ENCODE measurements at regions of chr1 and their contacts with region 1.

Region 1: DNA sequence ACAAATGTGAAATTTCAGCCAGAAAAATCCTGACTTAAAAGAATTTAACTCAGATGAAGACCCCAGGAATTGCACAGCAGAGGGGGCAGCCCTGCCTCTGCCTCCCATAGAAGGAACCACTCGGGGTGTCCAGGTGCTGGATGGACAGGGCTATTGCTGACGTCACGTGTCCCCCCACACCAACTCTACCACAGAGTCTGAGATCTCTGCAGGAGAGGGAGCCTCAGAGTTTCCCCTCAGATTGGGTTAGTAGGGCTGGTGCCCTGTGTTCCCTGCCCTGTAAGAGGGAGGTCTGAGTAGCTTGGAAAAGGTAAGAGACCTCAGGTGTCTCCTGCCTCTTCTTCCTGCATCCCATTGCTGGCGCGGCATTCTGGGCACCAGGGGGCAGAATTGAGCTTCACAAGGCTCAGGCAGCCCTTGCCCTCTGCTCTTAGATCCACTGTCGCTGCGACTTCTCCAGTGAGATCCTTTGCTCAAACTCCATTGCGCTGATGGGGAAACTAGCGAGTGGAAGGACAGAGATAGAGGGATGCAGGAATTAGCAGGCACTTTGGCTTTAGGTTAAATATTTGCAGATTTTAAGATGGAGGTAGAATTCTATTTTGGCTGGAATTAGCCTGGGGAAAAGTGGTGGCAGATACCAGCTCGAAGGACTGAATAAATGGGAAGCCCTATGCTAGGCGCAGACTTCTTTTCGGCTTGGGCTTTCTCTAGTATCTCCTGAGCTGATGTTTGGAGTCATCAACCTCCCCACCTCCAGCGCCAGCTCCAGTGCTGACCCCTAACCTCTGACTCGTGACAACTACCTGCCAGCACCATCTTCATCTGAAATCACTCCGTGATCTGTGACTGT is 42.8 kb upstream of the DMBX1 start:
- DNase-seq: peak; percentile 83 to 90 (median 86)
- ATAC-seq: peak; percentile 68
- H3K4me3 ChIP-seq: no peak overlapping the region
- H3K27ac ChIP-seq: no peak overlapping the region
- H3K4me1 ChIP-seq: peaks cover 9% of the 10 kb centered on the region
- H3K27me3 ChIP-seq: peaks cover 0 to 9% of the 10 kb centered on the region in 2 donors
- CTCF ChIP-seq: peak; percentile 76 to 88 (median 78)
- POLR2A ChIP-seq: no peak

Region 2: DNA sequence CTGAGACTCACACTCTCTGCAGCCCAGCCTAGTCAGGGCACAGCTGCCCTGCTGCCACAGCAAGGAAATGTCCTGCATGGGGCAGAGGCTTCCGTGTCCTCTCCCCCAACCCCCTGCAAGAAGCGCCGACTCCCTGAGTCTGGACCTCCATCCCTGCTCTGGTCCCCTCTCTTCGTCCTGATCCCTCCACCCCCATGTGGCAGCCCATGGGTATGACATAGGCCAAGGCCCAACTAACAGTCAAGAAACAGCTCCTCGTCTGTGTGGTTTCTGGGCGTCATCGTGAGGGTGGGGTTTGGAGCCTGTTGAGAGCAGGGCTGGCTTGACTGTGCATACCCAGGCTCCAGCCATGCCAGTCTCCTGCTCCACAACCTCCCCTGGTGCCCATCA is 33.3 kb before region 1 on chr1:
- intact Hi-C with region 1: no loop called
- DNase-seq: no peak
- ATAC-seq: no peak
- H3K4me3 ChIP-seq: no peak overlapping the region
- H3K27ac ChIP-seq: no peak overlapping the region
- H3K4me1 ChIP-seq: no peaks in the 10 kb centered on the region
- H3K27me3 ChIP-seq: no peaks in the 10 kb centered on the region
- CTCF ChIP-seq: no peak
- POLR2A ChIP-seq: no peak

Region 3: GRCh38 chr1:46539972-46540371 is 93.1 kb after region 1 on chr1:
- intact Hi-C with region 1: loop called (anchors 5 kb)
- DNase-seq: no peak
- ATAC-seq: no peak
- H3K4me3 ChIP-seq: no peak overlapping the region
- H3K27ac ChIP-seq: no peak overlapping the region
- H3K4me1 ChIP-seq: no peaks in the 10 kb centered on the region
- H3K27me3 ChIP-seq: no peaks in the 10 kb centered on the region
- CTCF ChIP-seq: no peak
- POLR2A ChIP-seq: no peak

Region 4: GRCh38 chr1:46549697-46550681 is 103.1 kb after region 1 on chr1:
- intact Hi-C with region 1: no loop called
- DNase-seq: peak in 1 of 4 donors; percentile 28
- ATAC-seq: no peak
- H3K4me3 ChIP-seq: no peak overlapping the region
- H3K27ac ChIP-seq: no peak overlapping the region
- H3K4me1 ChIP-seq: no peaks in the 10 kb centered on the region
- H3K27me3 ChIP-seq: no peaks in the 10 kb centered on the region
- CTCF ChIP-seq: no peak
- POLR2A ChIP-seq: no peak